ENCODE measurements at regions of chr11 and their contacts with region 1.

Region 1: GRCh38 chr11:8263769-8264410 is at the start of gene LMO1:
- DNase-seq: peak in 1 of 2 experiments; percentile 66
- H3K4me3 ChIP-seq: peak within 1 kb of the TSS; percentile 11; the same call in 1 of the 2 replicates
- H3K27ac ChIP-seq: no peak within 1 kb of the TSS
- H3K4me1 ChIP-seq: 0 out of 2 replicates have a peak, but pooled peaks cover 4% of the 10 kb centered on the region
- H3K27me3 ChIP-seq: no peaks in the 10 kb centered on the region
- CTCF ChIP-seq: peak; percentile 80
- total RNA-seq, gene LMO1: not detected in 2 replicates

Region 2: GRCh38 chr11:8192016-8192895 is 71.6 kb before region 1 on chr11:
- CTCF ChIA-PET with region 1: interaction called, 11 read pairs
- POLR2A ChIA-PET with region 1: no interaction called
- intact Hi-C with region 1: no loop called
- DNase-seq: peak in 1 of 2 experiments; percentile 57
- H3K4me3 ChIP-seq: no peak overlapping the region
- H3K27ac ChIP-seq: no peak overlapping the region
- H3K4me1 ChIP-seq: no peaks in the 10 kb centered on the region
- H3K27me3 ChIP-seq: no peaks in the 10 kb centered on the region; the same call in 1 of the 2 replicates
- CTCF ChIP-seq: peak; percentile 70

Region 3: DNA sequence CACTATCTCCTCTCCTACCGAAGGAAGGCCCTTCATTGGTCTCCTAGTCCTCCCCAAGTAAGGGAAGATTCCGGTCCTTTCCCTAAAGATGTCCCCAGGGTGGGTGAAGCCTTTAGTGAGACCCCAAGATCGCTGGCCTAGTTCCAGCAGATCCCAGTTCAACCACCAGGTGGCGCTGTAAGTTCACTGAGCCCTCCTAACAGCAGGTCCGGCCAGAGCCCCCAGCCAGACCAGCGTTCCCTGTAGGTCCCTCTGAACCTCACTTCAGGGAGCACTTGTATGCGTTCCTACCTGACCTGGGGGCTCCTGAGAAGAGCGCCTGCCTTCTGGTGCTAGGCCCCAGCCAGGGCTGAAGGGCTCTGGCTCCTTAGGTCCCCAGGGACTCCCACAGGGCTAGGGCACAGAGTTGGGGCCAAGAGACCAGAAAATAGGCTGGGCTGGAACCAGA is 38.3 kb before region 1 on chr11:
- CTCF ChIA-PET with region 1: no interaction called
- POLR2A ChIA-PET with region 1: no interaction called
- intact Hi-C with region 1: loop called (anchors 1 kb)
- DNase-seq: peak; percentile 41 to 57
- H3K4me3 ChIP-seq: no peak overlapping the region
- H3K27ac ChIP-seq: no peak overlapping the region
- H3K4me1 ChIP-seq: peaks cover 19% of the 10 kb centered on the region; the same call in 1 of the 2 replicates
- H3K27me3 ChIP-seq: no peaks in the 10 kb centered on the region
- CTCF ChIP-seq: peak; percentile 92